ENCODE measurements at regions of chr2 and their contacts with region 1.

Region 1: DNA sequence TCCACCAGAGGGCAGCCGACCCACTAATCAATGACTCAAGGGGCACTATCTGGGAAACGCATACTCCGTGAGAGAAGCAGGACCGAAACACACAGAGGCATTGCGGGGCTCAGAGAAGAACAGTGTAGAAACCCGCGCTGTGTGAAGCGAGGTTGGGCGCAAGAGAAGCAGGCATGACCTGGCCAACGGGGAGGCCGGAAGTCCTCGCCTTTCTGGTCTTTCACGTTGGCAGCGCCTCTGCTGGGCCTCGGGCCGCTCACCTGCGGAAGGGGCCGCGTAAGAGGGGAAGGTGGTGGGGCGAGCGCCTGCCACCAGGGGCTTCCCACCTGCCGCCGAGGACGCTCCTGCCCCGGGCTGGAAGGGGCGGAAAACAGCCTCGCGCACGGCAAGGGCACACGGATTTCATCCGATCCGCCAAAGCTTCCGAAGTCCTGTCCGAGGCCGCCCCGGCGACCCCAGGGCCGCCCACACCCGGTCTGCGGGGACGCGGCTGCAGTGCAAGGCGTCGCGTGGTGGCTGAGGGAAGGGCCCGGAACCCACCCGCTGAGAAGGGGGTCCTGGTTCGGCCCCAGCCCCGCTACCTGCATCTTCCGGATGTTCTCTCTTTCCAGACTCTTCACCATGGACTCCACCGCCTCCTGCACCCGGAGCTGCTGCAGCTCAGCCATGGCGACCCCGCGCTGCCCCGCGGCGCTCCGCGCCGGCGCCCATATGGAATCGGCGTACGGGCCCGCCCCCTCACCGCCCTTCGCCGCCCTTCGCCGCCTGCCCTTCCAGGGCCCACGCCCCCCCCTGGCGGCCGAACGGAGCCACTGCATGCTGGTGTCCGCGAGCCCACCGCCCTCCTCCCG is at the start of gene FAM136A:
- DNase-seq: peak; percentile 90
- H3K4me3 Mint-ChIP-seq: peak within 1 kb of the TSS; percentile 93
- H3K27ac Mint-ChIP-seq: peak within 1 kb of the TSS; percentile 91
- H3K4me1 Mint-ChIP-seq: peaks cover 42% of the 10 kb centered on the region
- H3K27me3 Mint-ChIP-seq: peaks cover 2% of the 10 kb centered on the region
- total RNA-seq, gene FAM136A: 34.1 to 37.4 TPM

Region 2: DNA sequence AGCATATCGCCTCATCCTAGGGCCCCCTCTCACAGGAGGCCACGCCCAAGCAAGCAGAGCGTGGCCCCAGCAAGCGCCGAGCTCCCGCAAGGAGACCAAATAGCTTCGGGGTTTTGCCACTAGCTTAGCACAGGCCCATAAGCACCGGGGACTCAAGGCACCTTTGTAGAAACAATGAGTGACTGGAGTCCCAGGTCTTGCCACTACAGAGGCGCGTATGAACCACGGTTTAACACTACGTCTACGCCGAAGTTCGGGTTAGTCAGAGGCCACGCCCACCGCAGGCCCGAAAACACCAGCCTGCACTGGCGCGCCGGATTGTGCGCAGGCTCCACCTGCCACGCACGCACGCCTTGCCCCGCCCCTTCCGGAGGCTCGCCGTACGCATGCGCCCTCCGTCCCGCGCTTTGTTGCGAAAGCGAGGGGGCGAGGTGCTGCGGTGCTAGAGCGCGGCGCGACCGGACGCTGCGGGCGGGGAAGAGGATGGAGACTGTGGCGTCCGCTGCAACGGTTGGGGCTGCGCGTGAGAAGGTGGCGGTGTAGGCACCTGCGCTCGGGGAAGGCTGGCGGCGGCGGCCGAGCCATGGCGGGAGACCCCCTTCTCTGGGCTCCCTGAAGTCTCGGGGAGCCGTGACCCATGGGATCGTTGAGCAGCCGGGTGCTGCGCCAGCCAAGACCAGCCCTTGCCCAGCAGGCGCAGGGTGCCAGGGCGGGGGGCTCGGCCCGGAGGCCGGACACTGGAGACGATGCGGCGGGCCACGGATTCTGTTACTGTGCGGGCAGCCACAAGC is 472.1 kb before region 1 on chr2 and contains the start of gene GMCL1:
- CTCF ChIA-PET with region 1: no interaction called
- POLR2A ChIA-PET with region 1: no interaction called
- DNase-seq: peak; percentile 99
- H3K4me3 Mint-ChIP-seq: peak within 1 kb of the TSS; percentile 85
- H3K27ac Mint-ChIP-seq: peak within 1 kb of the TSS; percentile 93
- H3K4me1 Mint-ChIP-seq: peaks cover 51% of the 10 kb centered on the region
- H3K27me3 Mint-ChIP-seq: no peaks in the 10 kb centered on the region
- total RNA-seq, gene GMCL1: 30.1 to 34.8 TPM

Region 3: DNA sequence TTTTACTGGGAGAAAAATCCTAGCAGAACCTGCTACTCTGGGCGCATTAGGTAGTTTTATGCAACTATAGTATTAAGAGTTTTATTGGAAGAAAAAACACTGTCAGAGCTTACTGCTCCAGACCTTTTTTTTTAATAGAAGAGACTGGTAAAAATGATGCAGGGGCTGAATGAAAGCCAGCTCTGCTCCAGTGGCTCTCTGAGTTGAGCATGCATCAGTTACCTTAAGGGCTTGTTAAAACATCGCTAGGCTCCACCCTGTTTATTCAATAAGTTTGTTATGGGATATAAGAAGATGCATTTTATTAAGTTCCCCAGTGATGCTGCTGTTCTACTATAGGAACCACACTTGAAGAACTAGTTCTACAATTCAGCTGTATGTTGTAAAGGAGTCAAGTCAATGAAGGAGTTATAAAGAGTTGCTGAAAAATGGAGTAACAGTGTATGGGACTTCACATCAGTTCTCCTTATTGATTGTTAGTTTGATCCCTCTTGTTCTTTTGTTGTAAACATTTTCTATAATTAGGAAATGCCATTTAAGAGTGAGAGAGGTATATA is 21.2 kb before region 1 on chr2:
- CTCF ChIA-PET with region 1: no interaction called
- POLR2A ChIA-PET with region 1: no interaction called
- DNase-seq: no peak
- H3K4me3 Mint-ChIP-seq: no peak overlapping the region
- H3K27ac Mint-ChIP-seq: no peak overlapping the region
- H3K4me1 Mint-ChIP-seq: peaks cover 11% of the 10 kb centered on the region
- H3K27me3 Mint-ChIP-seq: no peaks in the 10 kb centered on the region

Region 4: DNA sequence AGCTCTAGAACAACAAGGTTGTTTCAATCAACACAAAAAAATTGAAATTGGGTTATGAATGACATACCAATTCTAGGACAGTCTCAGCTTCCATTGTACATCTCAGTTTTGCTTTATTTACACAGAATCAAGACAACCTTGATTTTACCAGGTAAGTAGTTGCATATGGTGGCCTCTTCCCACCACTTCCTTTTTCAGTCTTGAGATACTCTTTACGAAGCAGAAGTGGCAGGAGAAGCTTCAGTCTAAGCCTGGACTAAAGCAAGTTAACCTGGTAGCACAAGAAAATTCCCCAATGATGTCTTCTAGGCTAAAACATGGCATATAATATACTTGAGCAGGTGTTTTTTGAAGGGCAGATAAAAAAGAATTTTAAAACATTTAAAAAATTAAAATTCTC is 11.0 kb after region 1 on chr2:
- CTCF ChIA-PET with region 1: interaction called, 24 read pairs
- POLR2A ChIA-PET with region 1: no interaction called
- DNase-seq: no peak
- H3K4me3 Mint-ChIP-seq: no peak overlapping the region
- H3K27ac Mint-ChIP-seq: no peak overlapping the region
- H3K4me1 Mint-ChIP-seq: peaks cover 3% of the 10 kb centered on the region
- H3K27me3 Mint-ChIP-seq: peaks cover 15% of the 10 kb centered on the region

Region 5: GRCh38 chr2:70321370-70321769 is 19.8 kb after region 1 on chr2:
- CTCF ChIA-PET with region 1: interaction called, 24 read pairs
- POLR2A ChIA-PET with region 1: no interaction called
- DNase-seq: no peak
- H3K4me3 Mint-ChIP-seq: no peak overlapping the region
- H3K27ac Mint-ChIP-seq: no peak overlapping the region
- H3K4me1 Mint-ChIP-seq: no peaks in the 10 kb centered on the region
- H3K27me3 Mint-ChIP-seq: peaks cover 24% of the 10 kb centered on the region

Region 6: GRCh38 chr2:70616168-70616694 is 314.7 kb after region 1 on chr2:
- CTCF ChIA-PET with region 1: interaction called, 87 read pairs
- POLR2A ChIA-PET with region 1: interaction called, 4 read pairs
- DNase-seq: no peak
- H3K4me3 Mint-ChIP-seq: no peak overlapping the region
- H3K27ac Mint-ChIP-seq: no peak overlapping the region
- H3K4me1 Mint-ChIP-seq: peaks cover 3% of the 10 kb centered on the region
- H3K27me3 Mint-ChIP-seq: peaks cover 14% of the 10 kb centered on the region

Region 7: DNA sequence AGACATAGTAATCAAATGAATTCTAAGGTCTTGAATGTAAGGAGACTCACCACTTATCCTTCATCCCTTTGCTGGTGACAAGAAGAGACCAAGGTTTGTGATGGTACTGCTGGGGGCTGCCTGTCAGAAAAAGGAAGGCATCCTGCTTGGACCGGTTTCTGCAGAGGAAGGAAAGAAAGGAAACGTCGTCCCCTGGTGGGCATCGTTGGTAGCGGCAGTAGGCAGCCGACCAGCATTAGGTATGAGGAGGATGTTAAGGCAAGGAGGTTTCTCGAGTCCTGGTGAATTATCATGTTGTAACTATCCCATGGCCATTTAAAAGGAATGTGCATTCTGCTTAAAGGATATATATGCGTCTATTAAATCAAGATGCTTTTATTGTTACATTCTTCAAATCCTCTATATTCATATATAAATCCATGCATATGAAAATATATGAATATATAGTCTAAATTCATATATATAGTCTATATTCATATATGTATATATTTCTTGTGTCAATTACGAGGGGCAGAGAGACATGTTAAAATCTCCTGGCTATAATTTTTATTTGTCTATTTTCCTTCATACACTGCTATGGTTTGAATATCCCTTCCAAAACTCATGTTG is 346.4 kb after region 1 on chr2:
- CTCF ChIA-PET with region 1: interaction called, 67 read pairs
- POLR2A ChIA-PET with region 1: interaction called, 4 read pairs
- DNase-seq: peak; percentile 72
- H3K4me3 Mint-ChIP-seq: no peak overlapping the region
- H3K27ac Mint-ChIP-seq: no peak overlapping the region
- H3K4me1 Mint-ChIP-seq: no peaks in the 10 kb centered on the region
- H3K27me3 Mint-ChIP-seq: peaks cover 22% of the 10 kb centered on the region